Panc1 (cell line): ENCODE measurements at regions of chr2 and their contacts with region 1.

Region 1: GRCh38 chr2:10471956-10472355 is 23.8 kb upstream of the ODC1 start:
- DNase-seq: no peak
- ATAC-seq: peak; percentile 32; the same call in 1 of the 2 replicates
- H3K4me3 ChIP-seq: no peak overlapping the region
- H3K27ac ChIP-seq: no peak overlapping the region
- H3K4me1 ChIP-seq: no peaks in the 10 kb centered on the region
- H3K27me3 ChIP-seq: no peaks in the 10 kb centered on the region
- CTCF ChIP-seq: no peak

Region 2: GRCh38 chr2:10487144-10488104 is 15.5 kb after region 1 on chr2:
- CTCF ChIA-PET with region 1: no interaction called
- POLR2A ChIA-PET with region 1: no interaction called
- in situ Hi-C with region 1: no loop called
- intact Hi-C with region 1: no loop called
- DNase-seq: peak; percentile 47
- ATAC-seq: peak; percentile 91
- H3K4me3 ChIP-seq: no peak overlapping the region
- H3K27ac ChIP-seq: no peak overlapping the region
- H3K4me1 ChIP-seq: peaks cover 8% of the 10 kb centered on the region
- H3K27me3 ChIP-seq: peaks cover 11% of the 10 kb centered on the region
- CTCF ChIP-seq: no peak

Region 3: GRCh38 chr2:10546975-10547391 is 75.0 kb after region 1 on chr2:
- CTCF ChIA-PET with region 1: interaction called, 12 read pairs
- POLR2A ChIA-PET with region 1: no interaction called
- in situ Hi-C with region 1: no loop called
- intact Hi-C with region 1: no loop called
- DNase-seq: no peak
- ATAC-seq: peak; percentile 50
- H3K4me3 ChIP-seq: no peak overlapping the region
- H3K27ac ChIP-seq: no peak overlapping the region
- H3K4me1 ChIP-seq: no peaks in the 10 kb centered on the region; the same call in 1 of the 2 replicates
- H3K27me3 ChIP-seq: no peaks in the 10 kb centered on the region
- CTCF ChIP-seq: no peak